CD4-positive, alpha-beta memory T cell (primary cell): ENCODE measurements at regions of chr3 and their contacts with region 1.

Region 1: DNA sequence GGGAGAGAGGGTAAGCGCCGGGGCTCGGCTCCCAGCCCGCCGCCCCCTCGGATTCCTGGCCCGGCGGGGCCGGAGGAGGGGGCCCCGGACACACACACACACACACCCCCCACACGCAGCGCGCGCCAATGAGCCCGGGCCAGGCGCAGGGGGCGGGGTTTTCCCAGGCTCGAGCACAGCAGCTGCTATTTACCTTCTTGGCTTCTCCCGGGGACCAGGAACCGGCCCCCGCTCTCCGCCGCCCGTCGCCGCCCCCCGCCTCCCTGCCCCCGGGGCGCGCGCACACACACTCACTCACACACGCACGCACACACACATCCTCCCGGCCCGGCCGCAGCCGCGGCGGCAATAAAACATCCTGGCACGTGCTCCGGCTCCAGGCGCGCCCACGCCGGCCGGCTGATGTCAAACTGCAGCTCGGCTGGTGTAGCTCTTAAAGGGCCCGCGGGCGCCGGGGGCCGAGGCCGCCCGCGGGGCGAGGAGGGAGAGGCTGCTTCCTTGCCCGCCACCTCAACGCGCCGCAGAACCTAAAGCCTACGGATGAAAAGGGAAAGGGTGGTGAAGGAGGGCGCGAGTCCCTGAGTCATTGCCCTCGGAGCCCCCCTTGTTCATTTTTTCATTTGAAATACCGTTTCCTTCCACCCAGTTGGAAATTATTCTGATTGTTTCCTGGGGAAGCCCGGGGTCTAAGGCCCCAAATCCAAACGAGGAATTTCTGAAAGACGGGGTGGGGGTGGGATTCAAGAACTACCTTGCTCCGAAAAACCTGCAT is 1.0 kb upstream of the HES1 start:
- DNase-seq: peak; percentile 78 to 84 (median 81)
- H3K4me3 ChIP-seq: peak overlapping the region; percentile 54 to 57
- H3K4me3 Mint-ChIP-seq: peak overlapping the region; percentile 78 to 97 (median 86)
- H3K27ac ChIP-seq: no peak overlapping the region
- H3K27ac Mint-ChIP-seq: peak overlapping the region in 6 of 7 donors; percentile 66 to 96 (median 92)
- H3K4me1 ChIP-seq: peaks cover 45% of the 10 kb centered on the region
- H3K4me1 Mint-ChIP-seq: peaks cover 28 to 68% (median 42%) of the 10 kb centered on the region in 4 donors
- H3K27me3 ChIP-seq: peaks cover 24% of the 10 kb centered on the region
- H3K27me3 Mint-ChIP-seq: peaks cover 45 to 58% of the 10 kb centered on the region in 2 donors

Region 2: GRCh38 chr3:193665370-193665989 is 469.5 kb before region 1 on chr3:
- CTCF ChIA-PET with region 1: interaction called, 11 read pairs
- POLR2A ChIA-PET with region 1: no interaction called
- intact Hi-C with region 1: loop called (anchors 2 kb)
- DNase-seq: peak in 4 of 5 donors; percentile 6 to 26 (median 20)
- H3K4me3 ChIP-seq: no peak overlapping the region
- H3K4me3 Mint-ChIP-seq: no peak overlapping the region
- H3K27ac ChIP-seq: no peak overlapping the region
- H3K27ac Mint-ChIP-seq: no peak overlapping the region
- H3K4me1 ChIP-seq: no peaks in the 10 kb centered on the region
- H3K4me1 Mint-ChIP-seq: peaks cover 0 to 1% (median 0%) of the 10 kb centered on the region in 4 donors
- H3K27me3 ChIP-seq: no peaks in the 10 kb centered on the region
- H3K27me3 Mint-ChIP-seq: no peaks in the 10 kb centered on the region

Region 3: GRCh38 chr3:193780810-193781472 is 354.0 kb before region 1 on chr3:
- CTCF ChIA-PET with region 1: interaction called, 6 read pairs
- POLR2A ChIA-PET with region 1: no interaction called
- intact Hi-C with region 1: loop called (anchors 2 kb)
- DNase-seq: no peak
- H3K4me3 ChIP-seq: no peak overlapping the region
- H3K4me3 Mint-ChIP-seq: no peak overlapping the region
- H3K27ac ChIP-seq: no peak overlapping the region
- H3K27ac Mint-ChIP-seq: peak overlapping the region in 1 of 7 donors; percentile 42
- H3K4me1 ChIP-seq: no peaks in the 10 kb centered on the region
- H3K4me1 Mint-ChIP-seq: peaks cover 0 to 8% (median 2%) of the 10 kb centered on the region in 4 donors
- H3K27me3 ChIP-seq: no peaks in the 10 kb centered on the region
- H3K27me3 Mint-ChIP-seq: peaks cover 18 to 23% of the 10 kb centered on the region in 2 donors

Region 4: DNA sequence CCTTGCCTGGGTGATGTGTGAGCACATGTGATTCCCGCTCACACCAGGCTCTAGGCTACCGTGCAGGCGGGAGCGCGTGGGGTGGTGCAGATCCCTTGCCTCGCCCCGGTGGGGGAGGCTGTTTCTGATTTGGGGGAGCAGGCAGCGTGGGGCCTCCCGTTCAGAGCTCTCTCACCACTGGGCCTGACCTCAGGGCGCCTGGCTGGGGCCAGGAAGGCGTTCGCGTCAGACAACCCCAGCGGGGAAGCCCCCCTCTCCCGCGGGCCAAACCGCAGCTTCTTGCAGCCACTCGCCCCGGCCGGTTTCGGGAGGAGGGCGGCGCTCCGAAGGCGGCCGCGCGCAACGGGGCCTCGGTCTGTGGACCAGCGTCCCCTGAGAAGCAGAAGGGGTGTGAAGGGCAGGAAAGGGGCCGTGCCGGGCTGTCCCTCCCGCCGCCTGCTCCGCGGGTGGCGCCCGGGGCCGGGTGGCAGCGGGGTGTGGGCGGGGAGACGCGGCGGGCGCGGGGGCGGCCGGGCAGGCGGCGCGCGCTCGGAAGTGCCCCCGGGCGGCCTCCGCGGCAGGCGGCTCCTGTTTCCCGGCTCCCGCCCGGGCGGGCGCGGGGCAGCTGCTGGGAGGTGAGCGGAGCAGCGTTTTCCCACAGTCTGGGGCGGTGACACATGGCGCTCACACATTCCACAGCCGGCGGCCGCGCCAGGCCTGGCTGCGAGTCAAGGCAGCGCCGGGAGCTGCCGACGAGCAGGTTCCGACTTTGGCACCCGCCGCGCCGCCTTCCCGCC is 64.1 kb before region 1 on chr3:
- CTCF ChIA-PET with region 1: no interaction called
- POLR2A ChIA-PET with region 1: no interaction called
- intact Hi-C with region 1: loop called (anchors 5 kb)
- DNase-seq: peak; percentile 17 to 65 (median 45)
- H3K4me3 ChIP-seq: peak overlapping the region in 1 of 2 donors; percentile 35
- H3K4me3 Mint-ChIP-seq: peak overlapping the region; percentile 46 to 82 (median 72)
- H3K27ac ChIP-seq: no peak overlapping the region
- H3K27ac Mint-ChIP-seq: no peak overlapping the region
- H3K4me1 ChIP-seq: peaks cover 5% of the 10 kb centered on the region
- H3K4me1 Mint-ChIP-seq: peaks cover 3 to 13% (median 7%) of the 10 kb centered on the region in 4 donors
- H3K27me3 ChIP-seq: no peaks in the 10 kb centered on the region
- H3K27me3 Mint-ChIP-seq: peaks cover 21 to 31% of the 10 kb centered on the region in 2 donors

Region 5: DNA sequence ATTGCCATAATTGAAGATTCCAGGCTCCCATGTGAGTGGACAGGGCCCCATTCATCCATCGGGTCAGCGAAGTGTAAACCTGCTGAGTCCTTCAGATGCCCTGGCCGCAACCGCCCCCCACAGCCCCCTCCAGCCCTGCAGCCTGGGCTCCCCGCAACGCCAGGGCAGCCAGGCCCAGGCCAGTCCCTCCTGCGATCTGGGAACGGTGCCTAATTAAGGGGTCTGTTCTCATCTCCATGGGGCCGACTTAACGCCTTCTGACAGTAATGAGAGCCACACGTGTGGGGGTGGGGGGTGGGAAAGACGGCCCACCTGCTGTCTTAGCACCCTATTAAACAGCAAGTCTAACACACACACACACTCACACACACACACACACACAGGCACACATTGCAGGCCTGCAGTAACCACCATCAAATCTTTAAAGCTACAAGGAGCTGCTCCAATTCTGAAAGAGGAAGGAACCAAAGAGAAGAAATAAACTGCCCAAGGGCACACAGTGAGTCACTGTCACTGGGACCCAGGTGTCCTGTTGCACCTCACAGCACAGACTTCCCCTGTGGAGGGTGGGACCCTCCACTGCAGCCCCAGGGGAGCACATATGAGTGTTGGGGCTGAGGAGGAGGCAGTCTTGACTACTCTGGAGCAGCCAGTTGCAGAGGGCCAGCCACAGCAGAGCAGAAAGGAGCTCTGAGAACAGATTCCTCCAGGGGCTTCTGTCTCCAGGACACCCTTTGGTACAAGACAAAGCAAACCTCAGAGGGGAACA is 30.8 kb before region 1 on chr3:
- CTCF ChIA-PET with region 1: no interaction called
- POLR2A ChIA-PET with region 1: no interaction called
- intact Hi-C with region 1: loop called (anchors 2 kb)
- DNase-seq: no peak
- H3K4me3 ChIP-seq: no peak overlapping the region
- H3K4me3 Mint-ChIP-seq: no peak overlapping the region
- H3K27ac ChIP-seq: no peak overlapping the region
- H3K27ac Mint-ChIP-seq: peak overlapping the region in 1 of 7 donors; percentile 6
- H3K4me1 ChIP-seq: peaks cover 9% of the 10 kb centered on the region
- H3K4me1 Mint-ChIP-seq: peaks cover 6 to 10% (median 7%) of the 10 kb centered on the region in 4 donors
- H3K27me3 ChIP-seq: no peaks in the 10 kb centered on the region
- H3K27me3 Mint-ChIP-seq: peaks cover 8 to 21% of the 10 kb centered on the region in 2 donors

Region 6: GRCh38 chr3:194486540-194487288 is 351.8 kb after region 1 on chr3 and contains the start of gene ATP13A3:
- CTCF ChIA-PET with region 1: no interaction called
- POLR2A ChIA-PET with region 1: no interaction called
- intact Hi-C with region 1: loop called (anchors 10 kb)
- DNase-seq: peak; percentile 92 to 94 (median 92)
- H3K4me3 ChIP-seq: peak within 1 kb of the TSS; percentile 67 to 90
- H3K4me3 Mint-ChIP-seq: peak within 1 kb of the TSS; percentile 93 to 98 (median 94)
- H3K27ac ChIP-seq: peak within 1 kb of the TSS; percentile 75
- H3K27ac Mint-ChIP-seq: peak within 1 kb of the TSS; percentile 90 to 98 (median 95)
- H3K4me1 ChIP-seq: peaks cover 41% of the 10 kb centered on the region
- H3K4me1 Mint-ChIP-seq: peaks cover 27 to 52% (median 40%) of the 10 kb centered on the region in 4 donors
- H3K27me3 ChIP-seq: no peaks in the 10 kb centered on the region
- H3K27me3 Mint-ChIP-seq: no peaks in the 10 kb centered on the region
- total RNA-seq, gene ATP13A3: 57.6 to 62.7 TPM

Region 7: GRCh38 chr3:194976049-194976451 is 841.1 kb after region 1 on chr3:
- CTCF ChIA-PET with region 1: no interaction called
- POLR2A ChIA-PET with region 1: no interaction called
- intact Hi-C with region 1: no loop called
- DNase-seq: no peak
- H3K4me3 ChIP-seq: no peak overlapping the region
- H3K4me3 Mint-ChIP-seq: no peak overlapping the region
- H3K27ac ChIP-seq: no peak overlapping the region
- H3K27ac Mint-ChIP-seq: no peak overlapping the region
- H3K4me1 ChIP-seq: no peaks in the 10 kb centered on the region
- H3K4me1 Mint-ChIP-seq: no peaks in the 10 kb centered on the region
- H3K27me3 ChIP-seq: no peaks in the 10 kb centered on the region
- H3K27me3 Mint-ChIP-seq: peaks cover 19 to 30% of the 10 kb centered on the region in 2 donors